Left ventricle myocardium inferior (tissue), 1 donor: ENCODE measurements at regions of chr12 and their contacts with region 1.

Region 1: GRCh38 chr12:123232807-123233543 is at the starts of genes MPHOSPH9 and MTRFR:
- DNase-seq: peak; percentile 99
- H3K4me3 ChIP-seq: peak within 1 kb of the TSS; percentile 82
- H3K27ac ChIP-seq: peak within 1 kb of the TSS; percentile 94
- H3K4me1 ChIP-seq: peaks cover 72% of the 10 kb centered on the region
- H3K27me3 ChIP-seq: no peaks in the 10 kb centered on the region
- CTCF ChIP-seq: no peak
- total RNA-seq, gene MPHOSPH9: 23.9 TPM
- total RNA-seq, gene MTRFR: 8.4 TPM

Region 2: GRCh38 chr12:122980183-122981046 is 252.6 kb before region 1 on chr12 and contains the start of gene ARL6IP4:
- intact Hi-C with region 1: loop called (anchors 10 kb)
- DNase-seq: peak; percentile 69
- H3K4me3 ChIP-seq: peak within 1 kb of the TSS; percentile 99
- H3K27ac ChIP-seq: peak within 1 kb of the TSS; percentile 90
- H3K4me1 ChIP-seq: peaks cover 98% of the 10 kb centered on the region
- H3K27me3 ChIP-seq: no peaks in the 10 kb centered on the region
- CTCF ChIP-seq: no peak
- total RNA-seq, gene ARL6IP4: 156 TPM

Region 3: GRCh38 chr12:123126186-123127006 is 106.6 kb before region 1 on chr12:
- intact Hi-C with region 1: no loop called
- DNase-seq: no peak
- H3K4me3 ChIP-seq: no peak overlapping the region
- H3K27ac ChIP-seq: peak overlapping the region; percentile 4
- H3K4me1 ChIP-seq: peaks cover 47% of the 10 kb centered on the region
- H3K27me3 ChIP-seq: no peaks in the 10 kb centered on the region
- CTCF ChIP-seq: no peak

Region 4: GRCh38 chr12:123468562-123469185 is 235.7 kb after region 1 on chr12:
- intact Hi-C with region 1: no loop called
- DNase-seq: no peak
- H3K4me3 ChIP-seq: no peak overlapping the region
- H3K27ac ChIP-seq: no peak overlapping the region
- H3K4me1 ChIP-seq: peaks cover 65% of the 10 kb centered on the region
- H3K27me3 ChIP-seq: no peaks in the 10 kb centered on the region
- CTCF ChIP-seq: no peak